ENCODE measurements at regions of chr13 and their contacts with region 1.

Region 1: GRCh38 chr13:30395192-30396084 is 26.9 kb upstream of the UBE2L5 start:
- DNase-seq: peak; percentile 89 to 99 (median 95)

Region 2: DNA sequence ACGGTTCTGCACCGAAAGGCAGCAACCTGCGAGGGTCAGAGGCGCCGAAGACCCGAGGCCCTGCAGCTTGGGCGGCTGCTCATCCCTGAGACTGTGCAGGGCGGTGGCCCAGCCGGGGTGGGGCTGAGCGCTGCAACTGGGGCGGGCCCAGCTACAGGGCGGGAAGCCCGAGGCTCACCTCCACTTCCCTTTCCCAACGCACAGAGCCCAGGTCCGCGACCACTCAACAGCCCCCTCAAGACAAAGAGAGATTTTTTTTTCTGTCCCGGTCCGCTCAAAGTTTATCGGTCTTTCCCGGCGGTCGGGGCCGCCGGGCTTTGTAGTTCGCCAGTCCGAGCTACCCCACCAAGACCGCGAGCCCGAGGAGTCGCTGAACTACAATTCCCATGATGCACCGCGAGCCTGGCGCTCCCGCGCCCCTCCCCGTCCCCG is 88.7 kb before region 1 on chr13:
- intact Hi-C with region 1: loop called (anchors 5 kb)
- DNase-seq: peak; percentile 87 to 99 (median 96)

Region 3: DNA sequence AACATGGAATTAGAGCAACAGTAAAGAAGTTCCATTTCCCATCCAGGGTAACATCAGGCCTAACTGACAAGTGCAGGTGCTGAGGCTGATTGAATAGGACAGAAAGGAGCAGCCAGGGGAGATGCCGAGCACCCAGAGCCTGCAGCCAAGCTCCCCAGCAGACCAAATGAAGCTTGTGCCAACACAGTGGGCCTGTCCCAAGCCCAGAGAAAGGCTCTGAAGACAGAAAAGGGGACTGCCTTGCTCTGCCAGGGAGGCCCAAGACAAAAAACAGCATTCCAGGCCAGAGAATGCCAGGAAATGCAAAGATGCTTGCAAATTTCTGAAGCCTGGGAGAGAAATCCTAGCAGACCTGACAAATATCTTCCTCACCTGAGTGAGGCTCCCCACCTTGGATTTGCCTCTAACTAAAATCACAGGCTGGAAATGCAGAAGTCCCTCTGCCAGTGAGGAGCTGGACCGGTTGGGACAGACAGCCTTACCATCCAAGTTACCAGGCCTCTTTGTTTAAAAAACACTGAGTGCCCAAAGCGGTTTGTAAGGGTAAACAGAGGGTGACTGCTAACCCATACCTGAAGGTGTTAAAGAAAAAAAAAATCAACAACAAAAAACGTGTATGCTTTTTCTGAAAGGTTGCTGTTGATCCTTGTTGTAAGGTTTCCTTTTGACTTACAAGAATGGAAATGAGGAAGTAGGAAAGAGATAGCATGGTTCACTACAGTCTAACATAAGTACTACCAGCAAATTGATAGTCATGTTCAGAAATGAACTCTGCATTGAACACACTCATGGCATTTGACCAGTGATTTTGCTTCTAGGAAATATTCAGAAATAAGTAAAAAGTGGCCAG is 82.1 kb after region 1 on chr13:
- intact Hi-C with region 1: no loop called
- DNase-seq: no peak

Measured in head of caudate nucleus (tissue), 42 donors.